A673 (cell line): ENCODE measurements at regions of chr14 and their contacts with region 1.

Region 1: GRCh38 chr14:45015133-45015532 is 53.1 kb downstream of the TOGARAM1 start:
- DNase-seq: no peak
- H3K4me3 ChIP-seq: no peak overlapping the region
- H3K27ac ChIP-seq: no peak overlapping the region
- H3K4me1 ChIP-seq: no peaks in the 10 kb centered on the region
- H3K27me3 ChIP-seq: no peaks in the 10 kb centered on the region
- CTCF ChIP-seq: no peak

Region 2: GRCh38 chr14:44992113-44992512 is 23.0 kb before region 1 on chr14:
- CTCF ChIA-PET with region 1: no interaction called
- POLR2A ChIA-PET with region 1: interaction called, 28 read pairs
- intact Hi-C with region 1: no loop called
- DNase-seq: no peak
- H3K4me3 ChIP-seq: no peak overlapping the region
- H3K27ac ChIP-seq: no peak overlapping the region
- H3K4me1 ChIP-seq: peaks cover 10% of the 10 kb centered on the region
- H3K27me3 ChIP-seq: no peaks in the 10 kb centered on the region
- CTCF ChIP-seq: no peak

Region 3: GRCh38 chr14:45400950-45401640 is 386.0 kb after region 1 on chr14:
- CTCF ChIA-PET with region 1: no interaction called
- POLR2A ChIA-PET with region 1: no interaction called
- intact Hi-C with region 1: no loop called
- DNase-seq: no peak
- H3K4me3 ChIP-seq: no peak overlapping the region
- H3K27ac ChIP-seq: no peak overlapping the region
- H3K4me1 ChIP-seq: no peaks in the 10 kb centered on the region
- H3K27me3 ChIP-seq: peaks cover 11% of the 10 kb centered on the region
- CTCF ChIP-seq: no peak